ENCODE measurements at regions of chr5 and their contacts with region 1.

Region 1: DNA sequence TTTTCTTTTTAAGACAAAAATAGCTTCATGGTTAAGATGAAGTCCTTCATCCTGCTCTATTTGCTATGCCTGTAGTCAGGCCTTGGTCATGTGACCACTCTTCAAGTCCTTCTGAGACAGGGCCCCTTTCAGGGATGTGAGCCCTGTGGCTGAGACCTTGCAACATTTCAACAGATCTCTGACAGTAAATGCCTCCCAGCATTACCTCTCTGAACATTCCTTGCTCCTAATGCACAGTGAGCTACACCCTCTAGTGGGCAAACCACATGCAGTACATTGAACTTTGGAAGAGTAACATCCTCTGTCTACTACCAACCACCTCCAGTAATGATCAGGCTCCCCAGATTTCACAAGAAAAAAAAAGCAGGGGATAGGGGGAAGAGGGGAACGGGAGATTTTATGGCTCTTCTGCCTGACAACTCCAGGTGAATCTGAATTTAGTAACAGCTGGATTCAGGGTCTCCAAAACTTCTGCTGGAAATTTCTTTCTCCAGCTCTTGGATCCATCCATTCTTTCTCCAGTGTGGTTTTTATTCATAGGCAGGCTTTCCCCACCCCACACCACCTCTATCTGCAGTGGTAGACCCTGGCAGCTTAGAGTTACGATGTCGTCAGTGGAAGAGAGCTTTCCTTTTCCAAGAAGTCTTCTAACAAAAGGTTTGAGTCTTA is 8.9 kb upstream of the FBXO38 start:
- DNase-seq: peak; percentile 86
- H3K4me3 Mint-ChIP-seq: no peak overlapping the region
- H3K27ac Mint-ChIP-seq: no peak overlapping the region
- H3K4me1 Mint-ChIP-seq: peaks cover 7% of the 10 kb centered on the region
- H3K27me3 Mint-ChIP-seq: no peaks in the 10 kb centered on the region
- CTCF ChIP-seq: peak; percentile 94

Region 2: GRCh38 chr5:147949711-147950573 is 424.9 kb before region 1 on chr5:
- CTCF ChIA-PET with region 1: interaction called, 5 read pairs
- POLR2A ChIA-PET with region 1: no interaction called
- intact Hi-C with region 1: loop called (anchors 2 kb)
- DNase-seq: peak; percentile 73
- H3K4me3 Mint-ChIP-seq: no peak overlapping the region
- H3K27ac Mint-ChIP-seq: peak overlapping the region; percentile 54
- H3K4me1 Mint-ChIP-seq: peaks cover 5% of the 10 kb centered on the region
- H3K27me3 Mint-ChIP-seq: no peaks in the 10 kb centered on the region
- CTCF ChIP-seq: peak; percentile 86

Region 3: DNA sequence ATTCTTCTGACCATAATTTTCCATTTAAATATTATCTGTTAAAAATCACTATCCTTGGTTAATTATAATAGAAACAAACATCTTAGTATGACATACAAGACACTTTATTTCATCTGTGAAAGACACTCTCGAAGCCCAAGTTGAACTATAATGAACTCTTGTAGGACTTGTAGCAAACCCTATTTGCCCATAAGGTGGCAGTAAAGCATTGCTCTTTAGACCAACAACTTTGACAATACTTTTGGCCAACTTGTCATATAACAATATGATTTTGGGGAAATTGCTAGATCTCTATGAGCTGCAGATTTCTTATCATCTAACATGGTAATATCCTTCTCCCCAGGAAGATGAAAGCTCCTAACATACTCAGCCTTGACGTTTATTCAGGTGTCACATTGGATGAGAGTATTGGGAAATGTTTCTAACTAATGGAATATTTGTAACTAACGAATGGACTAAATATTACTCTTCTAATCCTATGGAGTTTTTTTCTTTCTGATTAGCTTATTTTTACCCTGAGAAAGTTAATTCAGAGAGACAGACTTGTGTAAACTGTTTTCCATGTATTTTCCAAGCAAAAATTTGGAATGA is 195.5 kb before region 1 on chr5:
- CTCF ChIA-PET with region 1: interaction called, 118 read pairs
- POLR2A ChIA-PET with region 1: interaction called, 6 read pairs
- intact Hi-C with region 1: loop called (anchors 1 kb)
- DNase-seq: peak; percentile 84
- H3K4me3 Mint-ChIP-seq: no peak overlapping the region
- H3K27ac Mint-ChIP-seq: no peak overlapping the region
- H3K4me1 Mint-ChIP-seq: no peaks in the 10 kb centered on the region
- H3K27me3 Mint-ChIP-seq: peaks cover 7% of the 10 kb centered on the region
- CTCF ChIP-seq: peak; percentile 94

Region 4: GRCh38 chr5:148237785-148238184 is 137.0 kb before region 1 on chr5:
- CTCF ChIA-PET with region 1: interaction called, 12 read pairs
- POLR2A ChIA-PET with region 1: interaction called, 3 read pairs
- intact Hi-C with region 1: no loop called
- DNase-seq: no peak
- H3K4me3 Mint-ChIP-seq: no peak overlapping the region
- H3K27ac Mint-ChIP-seq: no peak overlapping the region
- H3K4me1 Mint-ChIP-seq: no peaks in the 10 kb centered on the region
- H3K27me3 Mint-ChIP-seq: no peaks in the 10 kb centered on the region
- CTCF ChIP-seq: no peak

Region 5: DNA sequence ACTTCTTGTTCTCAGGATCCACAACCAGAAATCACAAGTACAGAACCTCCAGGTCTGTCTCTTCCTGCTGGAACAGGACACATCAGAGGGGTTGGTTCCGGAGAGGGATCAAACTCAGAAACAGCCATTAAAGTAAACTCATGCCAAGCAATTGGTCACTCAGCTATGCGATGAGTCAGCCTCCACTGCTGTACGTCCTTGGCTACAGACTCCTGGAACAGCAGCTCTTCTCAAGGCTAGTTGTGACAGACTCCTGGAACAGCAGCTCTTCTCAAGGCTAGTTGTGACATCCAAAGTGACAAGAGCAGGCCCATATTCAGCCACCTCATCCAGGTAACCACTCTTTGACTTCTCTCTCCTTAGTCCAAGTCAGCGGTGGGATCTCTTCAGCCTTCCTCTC is 106.3 kb before region 1 on chr5 and contains the start of gene SPINK13:
- CTCF ChIA-PET with region 1: no interaction called
- POLR2A ChIA-PET with region 1: no interaction called
- intact Hi-C with region 1: no loop called
- DNase-seq: peak; percentile 84
- H3K4me3 Mint-ChIP-seq: no peak within 1 kb of the TSS
- H3K27ac Mint-ChIP-seq: peak within 1 kb of the TSS; percentile 37
- H3K4me1 Mint-ChIP-seq: peaks cover 16% of the 10 kb centered on the region
- H3K27me3 Mint-ChIP-seq: no peaks in the 10 kb centered on the region
- CTCF ChIP-seq: no peak
- total RNA-seq, gene SPINK13: not detected in 2 replicates

Region 6: DNA sequence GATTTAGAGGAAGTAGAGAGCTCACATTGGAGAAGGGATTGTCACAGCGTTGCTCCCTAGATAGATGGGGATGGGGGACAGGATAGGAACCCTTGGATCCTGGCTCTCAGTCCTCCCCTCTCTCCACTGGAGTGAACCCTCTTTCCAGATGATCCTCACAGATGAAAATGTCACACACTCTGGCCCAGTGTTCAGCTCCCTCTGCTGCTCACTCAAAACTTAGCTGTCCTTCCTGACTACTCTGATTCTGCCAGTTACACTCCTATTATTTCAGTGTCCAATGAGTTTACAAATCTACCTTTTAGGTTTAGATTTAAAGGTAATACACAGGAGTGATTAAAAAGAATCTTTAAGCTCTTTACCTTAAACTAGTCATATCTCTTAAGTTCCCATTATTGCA is 68.4 kb before region 1 on chr5:
- CTCF ChIA-PET with region 1: interaction called, 13 read pairs
- POLR2A ChIA-PET with region 1: interaction called, 8 read pairs
- intact Hi-C with region 1: no loop called
- DNase-seq: peak; percentile 7
- H3K4me3 Mint-ChIP-seq: no peak overlapping the region
- H3K27ac Mint-ChIP-seq: no peak overlapping the region
- H3K4me1 Mint-ChIP-seq: no peaks in the 10 kb centered on the region
- H3K27me3 Mint-ChIP-seq: no peaks in the 10 kb centered on the region
- CTCF ChIP-seq: no peak

Region 7: GRCh38 chr5:148343046-148343408 is 31.8 kb before region 1 on chr5:
- CTCF ChIA-PET with region 1: interaction called, 13 read pairs
- POLR2A ChIA-PET with region 1: no interaction called
- intact Hi-C with region 1: no loop called
- DNase-seq: peak; percentile 82
- H3K4me3 Mint-ChIP-seq: no peak overlapping the region
- H3K27ac Mint-ChIP-seq: peak overlapping the region; percentile 73
- H3K4me1 Mint-ChIP-seq: peaks cover 19% of the 10 kb centered on the region
- H3K27me3 Mint-ChIP-seq: no peaks in the 10 kb centered on the region
- CTCF ChIP-seq: no peak

Region 8: GRCh38 chr5:148397968-148398597 is 23.3 kb after region 1 on chr5:
- CTCF ChIA-PET with region 1: interaction called, 23 read pairs
- POLR2A ChIA-PET with region 1: no interaction called
- intact Hi-C with region 1: no loop called
- DNase-seq: peak; percentile 77
- H3K4me3 Mint-ChIP-seq: no peak overlapping the region
- H3K27ac Mint-ChIP-seq: peak overlapping the region; percentile 9
- H3K4me1 Mint-ChIP-seq: peaks cover 13% of the 10 kb centered on the region
- H3K27me3 Mint-ChIP-seq: no peaks in the 10 kb centered on the region
- CTCF ChIP-seq: no peak

Region 9: DNA sequence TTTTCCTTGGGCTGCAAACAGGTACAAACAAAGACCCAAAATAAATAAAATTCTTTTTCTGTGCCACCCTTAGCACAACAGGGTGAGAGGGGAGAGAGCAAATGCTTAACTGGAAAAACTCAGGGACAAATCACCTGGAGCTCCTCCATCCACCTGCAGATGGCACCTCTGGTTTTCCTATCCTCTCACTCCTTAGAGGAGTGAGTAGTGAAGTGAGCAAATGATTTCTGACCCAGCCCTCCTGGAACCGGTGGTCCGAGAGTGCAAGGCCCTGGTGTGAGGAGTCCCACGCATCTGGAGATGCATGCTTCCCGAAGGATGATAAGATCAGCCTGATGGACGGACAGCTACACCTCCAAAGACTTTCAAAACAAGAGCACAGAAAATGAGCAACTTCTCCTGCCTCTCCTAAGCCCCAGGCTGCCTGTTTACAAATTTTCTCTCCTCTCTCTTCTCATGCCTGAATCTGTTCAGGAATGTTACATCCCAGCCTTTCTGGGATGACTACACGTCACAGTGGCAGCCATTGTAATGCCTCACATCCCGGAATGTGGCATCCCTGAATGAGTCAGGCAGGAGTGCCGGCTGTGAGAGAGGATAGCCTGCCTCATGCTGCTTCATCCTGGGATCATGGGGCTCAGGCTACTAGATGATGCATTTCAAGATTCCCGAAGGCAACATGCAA is 538.0 kb after region 1 on chr5:
- CTCF ChIA-PET with region 1: no interaction called
- POLR2A ChIA-PET with region 1: no interaction called
- intact Hi-C with region 1: no loop called
- DNase-seq: peak; percentile 98
- H3K4me3 Mint-ChIP-seq: peak overlapping the region; percentile 1
- H3K27ac Mint-ChIP-seq: peak overlapping the region; percentile 76
- H3K4me1 Mint-ChIP-seq: peaks cover 68% of the 10 kb centered on the region
- H3K27me3 Mint-ChIP-seq: no peaks in the 10 kb centered on the region
- CTCF ChIP-seq: peak; percentile 75